Panc1 (cell line): ENCODE measurements at regions of chr7 and their contacts with region 1.

Region 1: DNA sequence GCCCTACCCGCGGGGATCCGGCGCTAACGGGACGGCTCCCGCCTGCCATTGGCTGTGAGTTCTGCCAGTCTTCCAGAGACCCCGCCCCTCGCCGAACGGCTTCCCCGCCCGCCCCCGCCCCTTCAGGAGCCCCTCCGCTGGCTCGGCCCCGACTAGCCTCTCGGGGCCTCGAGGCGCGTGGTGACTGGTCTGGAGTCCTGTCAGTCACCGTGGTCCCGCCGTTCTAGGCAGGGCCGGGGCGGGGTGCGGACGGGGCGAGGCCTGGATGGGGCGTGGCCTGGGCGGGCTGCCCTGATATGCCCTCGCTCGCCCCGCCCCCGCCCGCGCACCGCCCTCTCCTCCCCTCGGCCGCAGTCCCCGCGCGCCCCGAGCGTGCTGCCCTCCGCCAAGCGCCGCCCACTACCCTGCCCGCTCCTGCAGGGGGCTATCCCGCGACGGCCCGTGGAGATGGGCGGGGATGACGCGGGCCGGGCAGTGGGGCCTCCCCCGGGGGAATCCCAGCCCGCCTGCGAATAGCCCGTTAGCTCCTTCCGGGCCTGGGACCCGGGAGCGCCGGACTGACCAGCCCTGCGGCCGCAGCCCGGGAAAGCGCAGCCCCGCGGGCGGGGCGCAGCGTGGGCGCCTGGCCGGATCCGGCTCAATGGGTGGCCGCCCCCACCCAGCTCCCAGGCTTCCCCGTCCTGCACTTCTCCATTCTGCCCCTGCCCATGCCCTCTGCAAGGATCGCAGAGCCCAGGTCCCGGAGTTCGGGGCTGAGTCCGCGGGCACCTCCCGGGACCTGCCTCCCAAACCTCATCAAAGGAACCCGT is 450 bp upstream of the HIP1 start:
- DNase-seq: peak; percentile 76
- ATAC-seq: peak; percentile 98
- H3K4me3 ChIP-seq: peak overlapping the region; percentile 70 to 93
- H3K27ac ChIP-seq: peak overlapping the region; percentile 78
- H3K4me1 ChIP-seq: peaks cover 10% of the 10 kb centered on the region
- H3K27me3 ChIP-seq: no peaks in the 10 kb centered on the region
- CTCF ChIP-seq: no peak

Region 2: GRCh38 chr7:75599244-75599781 is 139.9 kb before region 1 on chr7:
- CTCF ChIA-PET with region 1: no interaction called
- POLR2A ChIA-PET with region 1: no interaction called
- in situ Hi-C with region 1: no loop called
- intact Hi-C with region 1: no loop called
- DNase-seq: no peak
- ATAC-seq: no peak
- H3K4me3 ChIP-seq: no peak overlapping the region
- H3K27ac ChIP-seq: no peak overlapping the region
- H3K4me1 ChIP-seq: peaks cover 16% of the 10 kb centered on the region
- H3K27me3 ChIP-seq: no peaks in the 10 kb centered on the region
- CTCF ChIP-seq: no peak

Region 3: GRCh38 chr7:75642810-75643486 is 96.2 kb before region 1 on chr7:
- CTCF ChIA-PET with region 1: no interaction called
- POLR2A ChIA-PET with region 1: no interaction called
- in situ Hi-C with region 1: no loop called
- intact Hi-C with region 1: loop called (anchors 10 kb)
- DNase-seq: peak; percentile 67
- ATAC-seq: peak; percentile 68
- H3K4me3 ChIP-seq: no peak overlapping the region
- H3K27ac ChIP-seq: no peak overlapping the region
- H3K4me1 ChIP-seq: peaks cover 10% of the 10 kb centered on the region
- H3K27me3 ChIP-seq: no peaks in the 10 kb centered on the region
- CTCF ChIP-seq: peak; percentile 93

Region 4: GRCh38 chr7:75756991-75757676 is 17.9 kb after region 1 on chr7:
- CTCF ChIA-PET with region 1: interaction called, 3 read pairs
- POLR2A ChIA-PET with region 1: interaction called, 11 read pairs
- in situ Hi-C with region 1: no loop called
- intact Hi-C with region 1: no loop called
- DNase-seq: no peak
- ATAC-seq: peak; percentile 86
- H3K4me3 ChIP-seq: no peak overlapping the region
- H3K27ac ChIP-seq: no peak overlapping the region
- H3K4me1 ChIP-seq: no peaks in the 10 kb centered on the region
- H3K27me3 ChIP-seq: no peaks in the 10 kb centered on the region
- CTCF ChIP-seq: peak; percentile 41

Region 5: GRCh38 chr7:75808106-75808505 is 68.9 kb after region 1 on chr7:
- CTCF ChIA-PET with region 1: no interaction called
- POLR2A ChIA-PET with region 1: no interaction called
- in situ Hi-C with region 1: no loop called
- intact Hi-C with region 1: no loop called
- DNase-seq: no peak
- ATAC-seq: no peak
- H3K4me3 ChIP-seq: no peak overlapping the region
- H3K27ac ChIP-seq: no peak overlapping the region
- H3K4me1 ChIP-seq: no peaks in the 10 kb centered on the region
- H3K27me3 ChIP-seq: no peaks in the 10 kb centered on the region
- CTCF ChIP-seq: no peak